ENCODE measurements at regions of chr14 and their contacts with region 1.

Region 1: GRCh38 chr14:23057757-23058653 is 685 bp upstream of the CDH24 start:
- DNase-seq: peak; percentile 76
- ATAC-seq: peak; percentile 55
- H3K4me3 ChIP-seq: peak overlapping the region; percentile 62
- H3K27ac ChIP-seq: peak overlapping the region; percentile 70
- H3K4me1 ChIP-seq: peaks cover 19% of the 10 kb centered on the region
- H3K27me3 ChIP-seq: no peaks in the 10 kb centered on the region
- CTCF ChIP-seq: peak; percentile 89
- POLR2A ChIP-seq: no peak; the same call in 1 of the 2 replicates
- RAD21 ChIP-seq: peak; percentile 82

Region 2: GRCh38 chr14:22668417-22668816 is 389.6 kb before region 1 on chr14:
- CTCF ChIA-PET with region 1: no interaction called
- POLR2A ChIA-PET with region 1: no interaction called
- dilution Hi-C with region 1: no loop called
- in situ Hi-C with region 1: no loop called
- intact Hi-C with region 1: no loop called
- DNase-seq: peak; percentile 65
- ATAC-seq: peak; percentile 66; the same call in 1 of the 2 replicates
- H3K4me3 ChIP-seq: no peak overlapping the region
- H3K27ac ChIP-seq: no peak overlapping the region
- H3K4me1 ChIP-seq: 0 out of 2 replicates have a peak, but pooled peaks cover 1% of the 10 kb centered on the region
- H3K27me3 ChIP-seq: peaks cover 8% of the 10 kb centered on the region
- CTCF ChIP-seq: no peak
- POLR2A ChIP-seq: no peak
- RAD21 ChIP-seq: no peak

Region 3: GRCh38 chr14:22929104-22929847 is 128.7 kb before region 1 on chr14 and contains the start of gene PRMT5:
- CTCF ChIA-PET with region 1: no interaction called
- POLR2A ChIA-PET with region 1: interaction called, 7 read pairs
- dilution Hi-C with region 1: no loop called
- in situ Hi-C with region 1: no loop called
- intact Hi-C with region 1: loop called (anchors 2 kb)
- DNase-seq: peak; percentile 100
- ATAC-seq: peak; percentile 97
- H3K4me3 ChIP-seq: peak within 1 kb of the TSS; percentile 64
- H3K27ac ChIP-seq: peak within 1 kb of the TSS; percentile 82
- H3K4me1 ChIP-seq: peaks cover 3% of the 10 kb centered on the region; the same call in 1 of the 2 replicates
- H3K27me3 ChIP-seq: no peaks in the 10 kb centered on the region
- CTCF ChIP-seq: no peak
- POLR2A ChIP-seq: peak; percentile 91
- RAD21 ChIP-seq: no peak
- total RNA-seq, gene PRMT5: 92.2 and 99.3 TPM in 2 replicates

Region 4: GRCh38 chr14:22994762-22995275 is 63.2 kb before region 1 on chr14:
- CTCF ChIA-PET with region 1: interaction called, 17 read pairs
- POLR2A ChIA-PET with region 1: interaction called, 11 read pairs
- dilution Hi-C with region 1: no loop called
- in situ Hi-C with region 1: loop called (anchors 5 kb)
- intact Hi-C with region 1: loop called (anchors 1 kb)
- DNase-seq: peak; percentile 48
- ATAC-seq: peak; percentile 94
- H3K4me3 ChIP-seq: no peak overlapping the region
- H3K27ac ChIP-seq: no peak overlapping the region
- H3K4me1 ChIP-seq: peaks cover 4% of the 10 kb centered on the region
- H3K27me3 ChIP-seq: no peaks in the 10 kb centered on the region; the same call in 1 of the 2 replicates
- CTCF ChIP-seq: peak; percentile 71
- POLR2A ChIP-seq: no peak
- RAD21 ChIP-seq: peak; percentile 71

Region 5: DNA sequence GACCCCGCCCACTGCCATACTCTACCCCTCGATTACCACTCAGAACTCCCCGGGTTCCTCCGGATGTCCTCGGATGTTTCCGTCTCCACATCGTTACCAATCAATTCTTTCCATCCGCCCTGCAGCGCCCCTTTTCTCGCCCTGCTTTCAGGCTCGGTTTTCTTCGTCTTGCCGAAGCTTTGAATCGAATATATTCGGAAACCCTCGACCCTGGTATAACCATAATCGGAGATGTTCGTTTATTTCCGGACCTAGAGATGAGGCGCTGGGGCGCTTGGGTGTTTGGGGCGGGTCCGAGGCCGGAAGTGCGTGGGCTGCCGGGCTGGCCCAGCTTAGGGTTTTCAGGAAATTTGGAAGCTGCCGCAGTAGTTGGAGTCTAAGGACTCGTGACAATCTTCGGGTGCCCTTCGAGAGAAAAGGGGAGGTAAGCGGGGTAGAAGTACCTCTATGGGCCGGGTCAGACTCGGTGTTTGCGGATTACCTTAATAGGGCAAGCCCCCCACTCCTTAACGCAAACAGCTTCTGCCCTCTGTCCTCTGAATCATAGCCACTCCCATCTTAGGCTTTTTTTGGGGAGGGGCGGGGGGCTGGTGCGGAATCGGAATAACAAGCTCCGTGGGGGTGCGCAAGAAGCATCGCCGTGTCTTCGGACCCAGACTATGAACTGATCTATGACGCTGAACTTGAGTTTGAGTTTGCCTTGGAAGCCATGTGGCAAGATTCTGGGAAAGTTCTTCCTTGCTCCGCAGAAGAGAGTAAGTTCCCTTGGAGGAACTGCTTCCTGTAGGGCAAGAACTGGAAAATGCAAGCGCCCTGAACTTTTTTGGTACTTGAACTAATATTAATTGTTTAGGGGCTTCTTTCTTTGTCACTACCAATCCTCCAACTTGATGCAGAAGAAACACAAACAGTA is 37.4 kb after region 1 on chr14 and contains the start of gene C14orf119:
- CTCF ChIA-PET with region 1: interaction called, 5 read pairs
- POLR2A ChIA-PET with region 1: interaction called, 12 read pairs
- dilution Hi-C with region 1: no loop called
- in situ Hi-C with region 1: no loop called
- intact Hi-C with region 1: no loop called
- DNase-seq: peak; percentile 99
- ATAC-seq: peak; percentile 91
- H3K4me3 ChIP-seq: peak within 1 kb of the TSS; percentile 67
- H3K27ac ChIP-seq: peak within 1 kb of the TSS; percentile 97
- H3K4me1 ChIP-seq: peaks cover 3% of the 10 kb centered on the region; the same call in 1 of the 2 replicates
- H3K27me3 ChIP-seq: no peaks in the 10 kb centered on the region
- CTCF ChIP-seq: no peak
- POLR2A ChIP-seq: peak; percentile 91; the same call in 1 of the 2 replicates
- RAD21 ChIP-seq: no peak
- total RNA-seq, gene C14orf119: 61.9 and 83.7 TPM in 2 replicates

Region 6: DNA sequence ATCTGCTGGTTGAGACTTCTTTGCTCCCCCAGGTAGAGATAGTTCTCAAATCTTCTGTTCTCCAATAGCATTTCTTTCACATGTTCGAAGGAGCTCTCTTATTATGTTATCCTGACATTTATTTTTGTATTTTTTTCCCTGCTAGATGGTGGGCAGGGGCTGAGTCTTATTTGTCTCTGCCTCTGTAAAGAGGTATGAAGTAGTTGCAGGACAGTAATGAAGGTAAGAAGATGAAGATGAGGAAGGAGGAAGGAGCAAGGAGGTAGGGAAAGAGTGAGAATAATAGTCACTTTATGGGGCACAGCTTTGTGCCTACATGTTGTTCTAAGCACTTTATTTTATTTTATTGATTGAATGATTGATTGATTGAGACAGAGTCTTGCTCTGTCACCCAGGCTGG is 51.8 kb after region 1 on chr14:
- CTCF ChIA-PET with region 1: interaction called, 4 read pairs
- POLR2A ChIA-PET with region 1: no interaction called
- dilution Hi-C with region 1: no loop called
- in situ Hi-C with region 1: no loop called
- intact Hi-C with region 1: loop called (anchors 1 kb)
- DNase-seq: no peak
- ATAC-seq: no peak
- H3K4me3 ChIP-seq: no peak overlapping the region
- H3K27ac ChIP-seq: no peak overlapping the region
- H3K4me1 ChIP-seq: peaks cover 22% of the 10 kb centered on the region
- H3K27me3 ChIP-seq: no peaks in the 10 kb centered on the region
- CTCF ChIP-seq: no peak
- POLR2A ChIP-seq: no peak
- RAD21 ChIP-seq: no peak

Measured in IMR-90 (cell line).